Naive thymus-derived CD8-positive, alpha-beta T cell (primary cell): ENCODE measurements at regions of chr10 and their contacts with region 1.

Region 1: DNA sequence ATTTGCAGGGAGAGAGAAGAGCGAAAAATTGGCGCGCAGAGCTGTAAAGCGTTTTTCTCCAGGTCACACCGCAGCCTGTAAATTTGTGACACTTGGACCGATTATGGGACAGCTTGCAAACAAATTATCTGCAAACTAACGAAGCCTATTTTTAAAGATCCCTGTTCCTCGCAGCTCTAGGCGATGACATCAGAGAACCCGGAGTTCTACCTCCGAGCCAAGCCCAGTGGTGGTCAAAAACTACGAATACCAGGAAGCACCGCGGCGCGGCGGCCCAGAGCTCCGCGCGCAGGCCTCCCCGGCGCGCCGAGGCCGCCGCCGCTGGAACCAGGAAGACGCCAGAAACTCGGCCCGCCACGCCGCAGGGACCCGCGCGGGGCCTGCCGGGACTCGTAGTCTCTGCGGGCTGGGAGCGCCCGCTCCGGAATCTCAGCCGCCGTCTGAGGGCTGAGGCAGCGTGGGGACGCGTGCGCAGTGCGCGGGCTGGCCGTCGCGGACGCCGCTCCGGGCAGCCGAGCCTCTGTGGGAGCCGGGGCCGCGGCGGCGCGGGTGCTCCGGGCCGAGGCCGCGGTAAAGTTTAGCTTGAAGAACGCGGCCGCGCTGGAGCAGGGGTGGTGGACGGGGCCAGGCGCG is at the start of gene PLEKHA1:
- DNase-seq: peak; percentile 86 to 94 (median 92)
- ATAC-seq: peak; percentile 87 to 88
- H3K4me3 Mint-ChIP-seq: peak within 1 kb of the TSS; percentile 91 to 98 (median 94)
- H3K27ac Mint-ChIP-seq: peak within 1 kb of the TSS; percentile 86 to 97 (median 96)
- H3K4me1 Mint-ChIP-seq: peaks cover 15 to 41% (median 37%) of the 10 kb centered on the region in 4 donors
- H3K27me3 Mint-ChIP-seq: peaks cover 0 to 10% (median under 1%) of the 10 kb centered on the region in 5 donors
- polyA plus RNA-seq, gene PLEKHA1: 76.9 to 91.6 (median 90.9) TPM

Region 2: DNA sequence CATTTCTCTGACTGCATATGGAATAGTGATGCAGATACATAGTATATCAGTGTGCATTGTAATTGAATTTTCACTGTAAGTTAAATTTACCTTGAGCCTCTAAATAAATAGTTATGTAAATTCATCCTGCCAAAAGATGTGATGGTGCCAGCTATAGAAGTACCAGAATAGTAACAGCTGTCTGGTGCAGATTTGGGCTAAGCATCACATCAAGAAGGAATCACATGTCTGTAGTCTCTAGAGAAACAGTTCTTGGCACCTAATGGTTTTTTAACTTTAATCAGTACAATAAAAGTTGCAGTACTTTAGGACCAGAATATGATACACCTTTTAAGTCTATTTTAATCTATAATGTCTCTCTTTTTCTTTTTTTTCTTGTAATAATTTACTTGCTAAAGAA is 17.5 kb after region 1 on chr10:
- POLR2A ChIA-PET with region 1: interaction called, 14 read pairs
- DNase-seq: no peak
- ATAC-seq: no peak
- H3K4me3 Mint-ChIP-seq: no peak overlapping the region
- H3K27ac Mint-ChIP-seq: peak overlapping the region in 5 of 10 donors; percentile 13 to 41 (median 17)
- H3K4me1 Mint-ChIP-seq: peaks cover 19 to 50% (median 42%) of the 10 kb centered on the region in 4 donors
- H3K27me3 Mint-ChIP-seq: no peaks in the 10 kb centered on the region

Region 3: DNA sequence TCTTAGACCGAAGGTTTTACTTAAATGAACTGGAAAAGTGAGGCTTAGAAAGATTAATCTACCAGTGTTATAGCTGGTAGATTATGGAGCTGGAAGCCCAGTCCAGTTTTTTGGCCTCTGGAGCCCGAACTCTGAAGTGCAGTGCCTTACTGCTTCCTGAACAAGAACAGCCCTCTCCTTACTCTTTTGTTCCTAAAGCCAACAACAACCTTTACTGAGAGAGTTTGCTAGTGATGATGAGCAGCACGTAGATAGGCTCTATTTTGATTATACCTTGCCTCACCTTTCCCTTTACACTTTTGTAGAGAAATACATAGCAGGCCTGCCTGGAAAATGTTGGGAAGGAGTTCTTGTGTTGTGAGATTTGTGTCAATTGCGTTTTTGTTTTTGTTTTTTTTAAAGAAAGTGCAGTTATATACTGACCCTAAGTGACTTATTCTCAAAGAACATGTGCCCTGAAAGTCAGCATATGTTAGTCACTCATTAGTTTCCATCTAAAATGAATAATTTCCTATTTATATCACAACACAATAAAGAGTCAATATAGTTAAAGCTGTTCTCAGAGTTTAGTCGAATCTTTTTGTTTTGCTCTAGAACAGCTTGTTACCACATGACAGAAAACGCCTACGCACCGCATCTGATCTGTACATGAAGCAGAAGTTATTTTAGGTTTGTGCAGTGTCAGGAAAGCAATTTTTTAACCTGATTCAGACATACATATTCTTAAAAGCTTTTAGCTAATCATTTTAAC is 33.2 kb after region 1 on chr10:
- POLR2A ChIA-PET with region 1: interaction called, 17 read pairs
- DNase-seq: peak in 9 of 10 donors; percentile 15 to 77 (median 47)
- ATAC-seq: peak; percentile 93
- H3K4me3 Mint-ChIP-seq: peak overlapping the region; percentile 20 to 73 (median 59)
- H3K27ac Mint-ChIP-seq: peak overlapping the region in 9 of 10 donors; percentile 38 to 90 (median 85)
- H3K4me1 Mint-ChIP-seq: peaks cover 23 to 56% (median 41%) of the 10 kb centered on the region in 4 donors
- H3K27me3 Mint-ChIP-seq: no peaks in the 10 kb centered on the region

Region 4: GRCh38 chr10:122419876-122420623 is 45.7 kb after region 1 on chr10:
- POLR2A ChIA-PET with region 1: interaction called, 31 read pairs
- DNase-seq: no peak
- ATAC-seq: no peak
- H3K4me3 Mint-ChIP-seq: peak overlapping the region in 7 of 10 donors; percentile 33 to 79 (median 51)
- H3K27ac Mint-ChIP-seq: peak overlapping the region in 9 of 10 donors; percentile 65 to 98 (median 93)
- H3K4me1 Mint-ChIP-seq: peaks cover 25 to 94% (median 72%) of the 10 kb centered on the region in 4 donors
- H3K27me3 Mint-ChIP-seq: no peaks in the 10 kb centered on the region

Region 5: GRCh38 chr10:122426829-122427228 is 52.5 kb after region 1 on chr10:
- POLR2A ChIA-PET with region 1: interaction called, 30 read pairs
- DNase-seq: no peak
- ATAC-seq: no peak
- H3K4me3 Mint-ChIP-seq: peak overlapping the region in 8 of 10 donors; percentile 1 to 46 (median 32)
- H3K27ac Mint-ChIP-seq: peak overlapping the region; percentile 28 to 92 (median 79)
- H3K4me1 Mint-ChIP-seq: peaks cover 17 to 60% (median 33%) of the 10 kb centered on the region in 4 donors
- H3K27me3 Mint-ChIP-seq: no peaks in the 10 kb centered on the region

Region 6: DNA sequence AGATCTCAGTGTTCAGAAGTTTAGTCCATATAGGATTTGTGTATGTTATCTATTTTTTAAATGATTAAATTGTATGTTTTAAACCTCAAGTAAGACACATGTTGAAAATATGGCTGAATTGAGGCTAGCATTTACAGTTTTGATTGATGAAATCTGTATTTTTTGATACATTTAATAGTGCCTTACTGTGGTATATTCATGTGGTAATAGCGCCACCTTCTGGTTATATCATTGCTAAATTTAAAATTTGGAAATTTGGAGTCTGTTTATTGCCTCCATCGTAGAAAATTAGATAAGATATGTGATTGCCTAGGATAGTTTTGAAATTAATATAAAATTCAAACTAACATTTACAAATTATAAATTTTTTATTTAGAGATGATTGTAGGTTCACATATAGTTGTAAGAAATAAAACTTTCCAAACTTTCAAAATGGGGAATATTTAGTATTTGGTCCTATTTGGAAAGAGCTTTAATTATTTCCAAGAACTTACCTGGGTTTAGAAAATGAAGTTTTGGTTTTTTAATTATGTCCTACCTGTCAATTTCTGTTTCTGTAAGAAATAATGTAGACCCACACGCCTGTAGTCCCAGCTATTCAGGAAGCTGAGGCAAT is 61.0 kb after region 1 on chr10:
- POLR2A ChIA-PET with region 1: interaction called, 10 read pairs
- DNase-seq: peak in 4 of 10 donors; percentile 4 to 70 (median 66)
- ATAC-seq: peak; percentile 42 to 61
- H3K4me3 Mint-ChIP-seq: no peak overlapping the region
- H3K27ac Mint-ChIP-seq: peak overlapping the region in 2 of 10 donors; percentile 19 to 46
- H3K4me1 Mint-ChIP-seq: peaks cover 0 to 11% (median 5%) of the 10 kb centered on the region in 4 donors
- H3K27me3 Mint-ChIP-seq: peaks cover 0 to 1% (median 0%) of the 10 kb centered on the region in 5 donors

Region 7: DNA sequence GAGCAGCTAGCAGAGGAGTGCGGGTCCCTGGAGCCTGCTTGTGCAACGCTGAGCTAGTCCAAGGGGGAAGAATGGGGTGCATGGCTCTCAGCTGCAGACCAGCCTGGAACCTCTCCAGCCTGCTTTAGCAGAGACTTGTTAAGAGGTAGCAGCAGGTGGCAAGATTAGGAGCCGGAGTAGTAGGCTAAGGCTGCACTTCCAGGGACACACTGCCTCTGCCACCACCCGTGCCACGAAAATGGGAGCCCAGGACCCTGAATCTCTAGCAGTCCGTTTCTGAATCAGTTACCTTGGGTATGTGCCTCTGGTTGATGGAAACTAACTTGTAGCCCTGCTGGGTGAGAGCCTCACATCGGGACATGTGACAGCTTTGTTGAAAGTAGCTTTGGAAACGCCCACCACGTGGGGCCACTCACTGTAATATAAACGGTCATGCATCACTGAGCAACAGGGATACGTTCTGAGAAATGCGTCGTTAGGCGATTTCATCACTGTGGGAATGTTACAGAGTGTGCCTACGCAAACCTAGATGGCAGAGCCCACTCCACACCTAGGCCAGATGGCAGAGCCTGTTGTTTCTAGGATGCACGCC is 112.9 kb after region 1 on chr10:
- POLR2A ChIA-PET with region 1: no interaction called
- DNase-seq: no peak
- ATAC-seq: no peak
- H3K4me3 Mint-ChIP-seq: no peak overlapping the region
- H3K27ac Mint-ChIP-seq: no peak overlapping the region
- H3K4me1 Mint-ChIP-seq: peaks cover 0 to 14% (median 3%) of the 10 kb centered on the region in 4 donors
- H3K27me3 Mint-ChIP-seq: peaks cover 0 to 2% (median 0%) of the 10 kb centered on the region in 5 donors